PC-9 (cell line): ENCODE measurements at regions of chr10 and their contacts with region 1.

Region 1: GRCh38 chr10:102220612-102221011 is 5.5 kb upstream of the ELOVL3 start:
- DNase-seq: no peak
- H3K4me3 ChIP-seq: no peak overlapping the region
- H3K27ac ChIP-seq: no peak overlapping the region
- H3K4me1 ChIP-seq: no peaks in the 10 kb centered on the region; the same call in 1 of the 2 replicates
- H3K27me3 ChIP-seq: no peaks in the 10 kb centered on the region
- CTCF ChIP-seq: no peak

Region 2: GRCh38 chr10:101807158-101807557 is 413.5 kb before region 1 on chr10:
- CTCF ChIA-PET with region 1: no interaction called
- POLR2A ChIA-PET with region 1: no interaction called
- intact Hi-C with region 1: no loop called
- DNase-seq: no peak
- H3K4me3 ChIP-seq: no peak overlapping the region
- H3K27ac ChIP-seq: no peak overlapping the region
- H3K4me1 ChIP-seq: no peaks in the 10 kb centered on the region
- H3K27me3 ChIP-seq: no peaks in the 10 kb centered on the region
- CTCF ChIP-seq: no peak

Region 3: GRCh38 chr10:102072673-102073527 is 147.7 kb before region 1 on chr10:
- CTCF ChIA-PET with region 1: no interaction called
- POLR2A ChIA-PET with region 1: no interaction called
- intact Hi-C with region 1: no loop called
- DNase-seq: peak in 1 of 2 experiments; percentile 72
- H3K4me3 ChIP-seq: no peak overlapping the region
- H3K27ac ChIP-seq: no peak overlapping the region
- H3K4me1 ChIP-seq: no peaks in the 10 kb centered on the region
- H3K27me3 ChIP-seq: no peaks in the 10 kb centered on the region
- CTCF ChIP-seq: peak; percentile 87

Region 4: DNA sequence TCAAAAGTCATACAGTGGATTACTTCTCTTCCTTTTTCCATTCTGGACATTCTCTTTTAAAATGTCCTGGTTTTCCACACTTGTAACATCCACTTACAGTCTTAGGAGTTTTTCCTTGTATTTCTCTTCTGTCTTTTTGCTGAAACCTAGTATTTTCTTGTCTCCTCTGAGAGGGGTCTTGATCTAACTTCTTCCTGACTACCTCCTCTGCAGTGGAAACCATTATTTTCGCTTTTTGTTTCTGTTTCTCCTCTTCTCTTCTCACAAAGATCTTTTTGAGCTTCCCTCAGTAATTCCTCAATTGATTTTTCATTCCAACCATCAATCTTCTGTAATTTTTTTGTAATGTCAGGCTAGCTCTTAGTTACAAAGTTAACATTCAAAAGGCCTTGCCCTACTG is 18.2 kb before region 1 on chr10:
- CTCF ChIA-PET with region 1: interaction called, 4 read pairs
- POLR2A ChIA-PET with region 1: interaction called, 50 read pairs
- intact Hi-C with region 1: no loop called
- DNase-seq: no peak
- H3K4me3 ChIP-seq: no peak overlapping the region
- H3K27ac ChIP-seq: no peak overlapping the region
- H3K4me1 ChIP-seq: peaks cover 9% of the 10 kb centered on the region
- H3K27me3 ChIP-seq: no peaks in the 10 kb centered on the region
- CTCF ChIP-seq: no peak

Region 5: DNA sequence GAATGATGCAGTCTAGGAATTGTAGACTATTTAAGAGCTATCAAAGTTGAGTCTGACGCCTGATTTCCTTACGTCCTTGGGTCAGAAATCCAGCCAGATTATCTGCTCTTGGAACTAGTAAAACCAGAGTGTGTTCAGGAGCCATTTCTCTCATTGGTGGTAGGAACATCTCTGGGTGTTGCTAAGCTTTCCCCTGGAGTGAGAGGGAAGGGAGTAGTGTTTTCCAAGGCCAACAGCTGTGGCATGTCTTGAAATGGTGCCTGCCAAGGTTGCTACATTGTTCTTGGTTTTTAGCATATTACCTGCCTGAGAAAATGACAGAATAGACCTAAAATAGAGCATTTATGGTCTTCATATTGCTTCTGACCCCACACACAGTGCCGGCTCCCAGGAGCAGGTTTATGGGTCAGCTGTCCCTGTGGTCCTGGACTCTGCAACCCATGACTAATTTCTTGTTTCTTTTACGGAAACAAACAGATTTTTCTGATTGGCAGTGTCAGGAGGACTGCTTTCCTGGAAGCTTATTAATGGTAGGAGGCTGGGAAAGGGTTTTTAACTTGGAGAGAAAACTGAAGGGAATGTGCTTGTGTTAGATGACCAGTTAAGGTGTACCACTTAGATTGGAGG is 42.2 kb after region 1 on chr10:
- CTCF ChIA-PET with region 1: interaction called, 16 read pairs
- POLR2A ChIA-PET with region 1: no interaction called
- intact Hi-C with region 1: no loop called
- DNase-seq: no peak
- H3K4me3 ChIP-seq: no peak overlapping the region
- H3K27ac ChIP-seq: no peak overlapping the region
- H3K4me1 ChIP-seq: no peaks in the 10 kb centered on the region
- H3K27me3 ChIP-seq: no peaks in the 10 kb centered on the region
- CTCF ChIP-seq: no peak

Region 6: GRCh38 chr10:102352066-102352715 is 131.6 kb after region 1 on chr10:
- CTCF ChIA-PET with region 1: no interaction called
- POLR2A ChIA-PET with region 1: no interaction called
- intact Hi-C with region 1: no loop called
- DNase-seq: peak in 1 of 2 experiments; percentile 41
- H3K4me3 ChIP-seq: no peak overlapping the region
- H3K27ac ChIP-seq: no peak overlapping the region
- H3K4me1 ChIP-seq: no peaks in the 10 kb centered on the region
- H3K27me3 ChIP-seq: no peaks in the 10 kb centered on the region
- CTCF ChIP-seq: peak; percentile 87

Region 7: GRCh38 chr10:103244663-103245271 is 1024.2 kb after region 1 on chr10:
- CTCF ChIA-PET with region 1: no interaction called
- POLR2A ChIA-PET with region 1: no interaction called
- intact Hi-C with region 1: no loop called
- DNase-seq: peak; percentile 49 to 58
- H3K4me3 ChIP-seq: no peak overlapping the region
- H3K27ac ChIP-seq: no peak overlapping the region
- H3K4me1 ChIP-seq: peaks cover 40% of the 10 kb centered on the region
- H3K27me3 ChIP-seq: no peaks in the 10 kb centered on the region
- CTCF ChIP-seq: peak; percentile 83